ENCODE measurements at regions of chr6 and their contacts with region 1.

Region 1: DNA sequence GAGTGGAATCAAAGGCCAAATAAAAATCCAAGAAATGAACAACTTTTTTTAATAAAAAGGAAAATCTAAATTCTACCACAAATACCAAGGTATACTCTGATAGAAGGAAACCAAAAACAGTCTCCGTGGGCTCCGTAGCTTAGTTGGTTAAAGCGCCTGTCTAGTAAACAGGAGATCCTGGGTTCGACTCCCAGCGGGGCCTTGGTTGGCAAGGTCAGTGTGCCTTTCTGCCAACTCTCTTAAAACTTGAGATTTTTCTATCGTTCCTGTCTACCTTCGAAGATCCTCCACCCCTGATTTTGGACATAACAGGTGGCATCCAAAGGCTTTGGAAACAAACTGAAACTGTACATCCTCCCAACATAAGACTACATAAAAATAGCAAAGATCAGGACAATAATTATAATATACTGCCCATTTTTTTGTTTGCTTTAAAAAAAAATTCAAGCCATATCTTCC is 197.9 kb downstream of the TRIM27 start:
- DNase-seq: no peak
- H3K4me3 Mint-ChIP-seq: no peak overlapping the region
- H3K27ac Mint-ChIP-seq: no peak overlapping the region
- H3K4me1 Mint-ChIP-seq: peaks cover 18% of the 10 kb centered on the region
- H3K27me3 Mint-ChIP-seq: peaks cover 75% of the 10 kb centered on the region

Region 2: DNA sequence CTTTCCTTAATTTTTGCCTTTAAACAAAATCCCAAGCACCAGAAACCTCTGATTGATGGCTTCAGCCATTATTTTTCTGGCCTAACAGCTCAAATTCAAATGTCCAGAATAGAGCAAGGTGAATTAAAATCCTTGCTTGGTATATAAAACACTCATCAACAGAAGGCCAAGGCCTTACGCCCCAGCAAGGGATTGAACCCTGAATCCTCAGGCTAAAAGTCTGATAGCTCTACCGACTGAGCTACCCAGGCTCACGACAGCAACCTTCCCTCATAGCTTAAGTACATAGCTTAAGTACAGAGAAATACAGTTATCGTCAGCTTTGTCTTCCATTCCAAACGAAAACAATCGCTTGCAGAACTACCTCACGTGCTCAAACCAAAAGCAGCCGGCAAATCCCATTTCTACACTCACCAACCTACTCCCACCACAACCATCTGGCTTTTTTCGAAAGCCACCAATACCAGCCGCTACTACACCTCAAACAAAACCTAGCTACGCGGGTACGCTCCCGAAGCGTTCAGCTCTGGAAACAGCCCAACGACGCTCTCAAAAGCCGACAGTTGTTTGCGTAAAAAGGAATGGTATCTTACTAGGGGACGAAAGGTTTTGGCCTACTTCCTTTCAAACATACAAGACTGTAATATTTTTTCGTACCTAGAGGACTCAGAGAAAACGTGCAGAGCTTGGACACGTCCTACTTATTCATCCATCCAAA is 32.7 kb before region 1 on chr6:
- CTCF ChIA-PET with region 1: no interaction called
- intact Hi-C with region 1: loop called (anchors 5 kb)
- DNase-seq: no peak
- H3K4me3 Mint-ChIP-seq: peak overlapping the region; percentile 20
- H3K27ac Mint-ChIP-seq: no peak overlapping the region
- H3K4me1 Mint-ChIP-seq: peaks cover 26% of the 10 kb centered on the region
- H3K27me3 Mint-ChIP-seq: peaks cover 81% of the 10 kb centered on the region

Region 3: GRCh38 chr6:28710466-28711191 is 15.3 kb before region 1 on chr6:
- CTCF ChIA-PET with region 1: no interaction called
- intact Hi-C with region 1: no loop called
- DNase-seq: peak; percentile 33
- H3K4me3 Mint-ChIP-seq: peak overlapping the region; percentile 38
- H3K27ac Mint-ChIP-seq: no peak overlapping the region
- H3K4me1 Mint-ChIP-seq: peaks cover 6% of the 10 kb centered on the region
- H3K27me3 Mint-ChIP-seq: peaks cover 71% of the 10 kb centered on the region

Region 4: GRCh38 chr6:28789553-28790083 is 63.7 kb after region 1 on chr6:
- CTCF ChIA-PET with region 1: no interaction called
- intact Hi-C with region 1: loop called (anchors 5 kb)
- DNase-seq: peak; percentile 42
- H3K4me3 Mint-ChIP-seq: peak overlapping the region; percentile 69
- H3K27ac Mint-ChIP-seq: peak overlapping the region; percentile 10
- H3K4me1 Mint-ChIP-seq: peaks cover 14% of the 10 kb centered on the region
- H3K27me3 Mint-ChIP-seq: peaks cover 86% of the 10 kb centered on the region